Activated CD8-positive, alpha-beta T cell treated with anti-CD3 and anti-CD28 coated beads for 36 hours (primary cell): ENCODE measurements at regions of chr7 and their contacts with region 1.

Region 1: DNA sequence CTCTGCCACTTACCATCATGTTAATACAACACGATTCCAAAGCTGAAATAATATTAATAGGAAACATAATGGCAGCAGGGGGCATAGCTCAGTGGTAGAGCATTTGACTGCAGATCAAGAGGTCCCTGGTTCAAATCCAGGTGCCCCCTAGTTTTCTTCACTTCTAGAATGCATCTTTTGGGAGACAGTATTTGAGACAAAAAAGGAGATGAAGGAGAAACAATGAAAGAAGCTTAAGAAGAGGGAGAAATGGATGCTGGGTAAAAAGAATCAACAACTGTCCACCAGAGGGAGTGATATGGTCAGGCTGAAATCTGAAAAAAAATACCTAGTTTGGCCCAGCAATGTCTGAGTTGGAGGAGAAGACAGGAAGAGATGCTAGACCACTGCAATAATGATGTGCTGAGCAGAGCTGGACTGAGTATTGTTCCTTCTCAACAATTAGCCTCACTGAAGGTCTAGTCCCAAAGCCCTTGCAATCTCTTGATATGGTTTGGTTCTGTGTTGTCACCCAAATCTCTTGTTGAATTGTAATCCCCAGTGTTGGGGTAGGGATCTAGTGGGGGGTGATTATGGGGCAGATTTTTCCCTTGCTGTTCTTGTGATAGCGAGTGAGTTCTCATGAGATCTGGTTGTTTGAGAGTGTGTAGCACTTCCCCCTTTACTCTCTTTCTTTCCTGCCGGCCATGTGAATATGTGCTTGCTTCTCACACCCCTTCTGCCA is 48.3 kb downstream of the ZNF783 start:
- DNase-seq: peak; percentile 36
- ATAC-seq: peak; percentile 88
- H3K4me3 Mint-ChIP-seq: no peak overlapping the region
- H3K27ac Mint-ChIP-seq: no peak overlapping the region
- H3K4me1 Mint-ChIP-seq: no peaks in the 10 kb centered on the region
- H3K27me3 Mint-ChIP-seq: no peaks in the 10 kb centered on the region
- CTCF ChIP-seq: peak; percentile 55

Region 2: GRCh38 chr7:148535217-148535616 is 775.1 kb before region 1 on chr7:
- CTCF ChIA-PET with region 1: no interaction called
- POLR2A ChIA-PET with region 1: no interaction called
- intact Hi-C with region 1: no loop called
- DNase-seq: peak; percentile 61
- ATAC-seq: peak; percentile 80
- H3K4me3 Mint-ChIP-seq: peak overlapping the region; percentile 60
- H3K27ac Mint-ChIP-seq: no peak overlapping the region
- H3K4me1 Mint-ChIP-seq: peaks cover 6% of the 10 kb centered on the region
- H3K27me3 Mint-ChIP-seq: peaks cover 22% of the 10 kb centered on the region
- CTCF ChIP-seq: no peak

Region 3: GRCh38 chr7:149161241-149161848 is 148.9 kb before region 1 on chr7:
- CTCF ChIA-PET with region 1: no interaction called
- POLR2A ChIA-PET with region 1: no interaction called
- intact Hi-C with region 1: no loop called
- DNase-seq: peak; percentile 21
- ATAC-seq: peak; percentile 65
- H3K4me3 Mint-ChIP-seq: no peak overlapping the region
- H3K27ac Mint-ChIP-seq: no peak overlapping the region
- H3K4me1 Mint-ChIP-seq: peaks cover 29% of the 10 kb centered on the region
- H3K27me3 Mint-ChIP-seq: no peaks in the 10 kb centered on the region
- CTCF ChIP-seq: no peak

Region 4: DNA sequence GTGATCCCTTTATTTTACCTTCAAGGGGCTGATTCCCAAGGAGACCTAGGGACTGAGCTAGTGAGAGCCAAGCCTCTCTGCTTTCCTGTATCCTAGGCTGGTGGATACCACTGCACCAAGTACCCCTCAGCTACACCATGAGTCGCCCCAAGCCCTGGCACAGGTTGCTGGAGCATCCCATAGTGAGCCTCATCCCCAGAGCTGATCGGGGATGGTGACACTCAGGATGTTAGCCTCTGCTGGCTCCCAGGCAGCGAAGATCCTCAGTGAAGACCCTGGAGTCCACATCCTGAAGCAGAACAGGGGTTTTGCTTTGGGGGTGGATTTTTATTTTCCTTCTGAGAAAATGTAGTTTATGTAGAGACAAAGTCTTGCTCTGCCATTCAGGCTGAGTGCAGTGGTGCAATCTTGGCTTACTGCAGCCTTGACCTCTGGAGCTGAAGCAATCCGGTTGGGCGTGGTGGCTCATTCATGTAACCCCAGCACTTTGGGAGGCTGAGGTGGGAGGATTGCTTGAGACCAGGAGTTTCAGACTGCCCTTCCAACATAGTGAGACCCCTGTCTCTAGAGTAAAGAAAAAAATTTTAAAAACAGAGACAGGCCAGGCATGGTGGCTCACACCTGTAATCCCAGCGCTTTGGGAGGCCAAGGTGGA is 83.3 kb before region 1 on chr7:
- CTCF ChIA-PET with region 1: no interaction called
- POLR2A ChIA-PET with region 1: no interaction called
- intact Hi-C with region 1: no loop called
- DNase-seq: no peak
- ATAC-seq: no peak
- H3K4me3 Mint-ChIP-seq: no peak overlapping the region
- H3K27ac Mint-ChIP-seq: no peak overlapping the region
- H3K4me1 Mint-ChIP-seq: no peaks in the 10 kb centered on the region
- H3K27me3 Mint-ChIP-seq: peaks cover 2% of the 10 kb centered on the region
- CTCF ChIP-seq: no peak

Region 5: GRCh38 chr7:149267733-149268132 is 42.5 kb before region 1 on chr7:
- CTCF ChIA-PET with region 1: no interaction called
- POLR2A ChIA-PET with region 1: no interaction called
- intact Hi-C with region 1: no loop called
- DNase-seq: no peak
- ATAC-seq: no peak
- H3K4me3 Mint-ChIP-seq: no peak overlapping the region
- H3K27ac Mint-ChIP-seq: no peak overlapping the region
- H3K4me1 Mint-ChIP-seq: peaks cover 32% of the 10 kb centered on the region
- H3K27me3 Mint-ChIP-seq: no peaks in the 10 kb centered on the region
- CTCF ChIP-seq: no peak

Region 6: GRCh38 chr7:149284850-149285626 is 25.2 kb before region 1 on chr7:
- CTCF ChIA-PET with region 1: interaction called, 14 read pairs
- POLR2A ChIA-PET with region 1: no interaction called
- intact Hi-C with region 1: no loop called
- DNase-seq: peak; percentile 98
- ATAC-seq: peak; percentile 98
- H3K4me3 Mint-ChIP-seq: peak overlapping the region; percentile 86
- H3K27ac Mint-ChIP-seq: peak overlapping the region; percentile 80
- H3K4me1 Mint-ChIP-seq: peaks cover 32% of the 10 kb centered on the region
- H3K27me3 Mint-ChIP-seq: no peaks in the 10 kb centered on the region
- CTCF ChIP-seq: no peak

Region 7: GRCh38 chr7:149321978-149322541 is 11.8 kb after region 1 on chr7:
- CTCF ChIA-PET with region 1: interaction called, 22 read pairs
- POLR2A ChIA-PET with region 1: interaction called, 4 read pairs
- intact Hi-C with region 1: no loop called
- DNase-seq: no peak
- ATAC-seq: peak; percentile 51
- H3K4me3 Mint-ChIP-seq: peak overlapping the region; percentile 27
- H3K27ac Mint-ChIP-seq: peak overlapping the region; percentile 4
- H3K4me1 Mint-ChIP-seq: peaks cover 8% of the 10 kb centered on the region
- H3K27me3 Mint-ChIP-seq: peaks cover 8% of the 10 kb centered on the region
- CTCF ChIP-seq: no peak